ENCODE measurements at regions of chr12 and their contacts with region 1.

Region 1: DNA sequence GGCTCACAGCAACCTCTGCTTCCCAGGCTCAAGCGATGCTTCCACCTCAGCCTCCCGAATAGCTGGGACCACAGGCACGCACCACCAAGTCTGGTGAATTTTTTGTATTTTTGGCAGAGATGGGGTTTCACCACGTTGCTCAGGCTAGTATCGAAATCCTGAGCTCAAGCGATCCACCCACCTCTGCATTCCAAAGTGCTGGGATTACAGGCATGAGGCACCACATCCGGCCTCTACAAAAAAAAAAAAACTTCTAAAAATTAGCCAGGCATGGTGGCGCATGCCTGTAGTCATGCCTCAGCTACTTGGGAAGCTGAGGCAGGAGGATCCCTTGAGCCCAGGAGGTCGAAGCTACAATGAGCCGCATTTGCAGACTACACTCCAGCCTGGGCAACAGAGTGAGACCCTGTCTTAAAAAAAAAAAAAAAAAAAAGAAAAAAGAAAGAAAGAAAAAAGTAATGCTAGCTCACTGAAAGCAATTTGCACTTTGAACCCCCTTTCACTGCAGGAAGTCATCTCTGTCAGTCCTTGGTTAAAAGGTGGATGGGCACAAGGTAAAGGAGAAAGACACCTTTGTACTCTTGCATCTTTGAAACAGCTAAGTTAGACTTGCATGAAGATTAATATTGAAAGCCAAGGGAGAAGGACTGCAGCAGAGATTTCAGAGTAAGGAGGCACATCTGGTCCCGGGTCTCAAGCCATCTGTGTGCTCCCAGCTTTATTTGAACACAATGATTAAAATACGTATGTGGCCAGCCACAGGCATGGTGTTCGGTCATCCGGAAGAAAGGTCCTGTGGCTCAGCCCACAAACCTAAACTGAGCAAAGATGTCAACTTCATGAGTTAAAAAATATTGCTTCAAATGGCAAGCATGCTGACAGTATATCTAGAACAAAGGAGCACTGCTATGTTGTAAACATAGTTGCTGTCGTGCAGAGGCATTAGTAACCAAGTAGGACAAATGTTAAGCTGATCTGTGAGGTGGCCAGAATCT is 103.8 kb upstream of the HMGA2 start:
- DNase-seq: peak; percentile 42
- ATAC-seq: no peak
- H3K4me3 ChIP-seq: no peak overlapping the region
- H3K27ac ChIP-seq: no peak overlapping the region
- H3K4me1 ChIP-seq: no peaks in the 10 kb centered on the region
- H3K27me3 ChIP-seq: no peaks in the 10 kb centered on the region
- CTCF ChIP-seq: no peak
- POLR2A ChIP-seq: no peak
- RAD21 ChIP-seq: no peak

Region 2: GRCh38 chr12:64877363-64878004 is 842.9 kb before region 1 on chr12:
- CTCF ChIA-PET with region 1: no interaction called
- POLR2A ChIA-PET with region 1: no interaction called
- dilution Hi-C with region 1: no loop called
- in situ Hi-C with region 1: no loop called
- intact Hi-C with region 1: no loop called
- DNase-seq: no peak
- ATAC-seq: no peak
- H3K4me3 ChIP-seq: no peak overlapping the region
- H3K27ac ChIP-seq: no peak overlapping the region
- H3K4me1 ChIP-seq: no peaks in the 10 kb centered on the region
- H3K27me3 ChIP-seq: peaks cover 29% of the 10 kb centered on the region
- CTCF ChIP-seq: no peak
- POLR2A ChIP-seq: no peak
- RAD21 ChIP-seq: no peak

Region 3: DNA sequence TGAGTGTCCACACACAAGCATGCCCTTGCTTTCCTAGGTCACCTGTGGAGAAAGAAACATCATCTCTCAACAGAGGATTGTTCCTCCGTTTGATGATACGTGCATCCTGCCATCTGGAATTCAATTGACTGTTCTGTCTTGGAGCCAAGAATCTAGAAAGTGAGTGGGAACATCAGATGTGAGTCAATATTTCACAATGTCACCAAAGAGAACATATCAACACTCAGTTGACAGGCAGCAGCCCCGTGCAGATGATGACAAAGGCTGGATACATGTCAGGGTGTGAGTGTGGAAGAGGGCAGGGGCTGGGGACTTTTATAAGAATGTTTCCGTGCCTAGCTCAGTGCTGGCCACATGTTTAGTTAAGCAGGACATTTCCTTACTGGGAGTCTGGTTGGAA is 819.9 kb before region 1 on chr12:
- CTCF ChIA-PET with region 1: no interaction called
- POLR2A ChIA-PET with region 1: no interaction called
- dilution Hi-C with region 1: no loop called
- in situ Hi-C with region 1: loop called (anchors 25 kb)
- intact Hi-C with region 1: loop called (anchors 10 kb)
- DNase-seq: peak; percentile 76
- ATAC-seq: peak; percentile 46; the same call in 1 of the 2 replicates
- H3K4me3 ChIP-seq: no peak overlapping the region
- H3K27ac ChIP-seq: no peak overlapping the region
- H3K4me1 ChIP-seq: peaks cover 3% of the 10 kb centered on the region; the same call in 1 of the 2 replicates
- H3K27me3 ChIP-seq: no peaks in the 10 kb centered on the region
- CTCF ChIP-seq: no peak
- POLR2A ChIP-seq: no peak
- RAD21 ChIP-seq: no peak

Region 4: GRCh38 chr12:65685514-65685913 is 34.9 kb before region 1 on chr12:
- CTCF ChIA-PET with region 1: no interaction called
- POLR2A ChIA-PET with region 1: no interaction called
- dilution Hi-C with region 1: no loop called
- in situ Hi-C with region 1: no loop called
- intact Hi-C with region 1: no loop called
- DNase-seq: peak; percentile 43
- ATAC-seq: peak; percentile 59; the same call in 1 of the 2 replicates
- H3K4me3 ChIP-seq: no peak overlapping the region
- H3K27ac ChIP-seq: no peak overlapping the region
- H3K4me1 ChIP-seq: no peaks in the 10 kb centered on the region; the same call in 1 of the 2 replicates
- H3K27me3 ChIP-seq: no peaks in the 10 kb centered on the region
- CTCF ChIP-seq: peak; percentile 58
- POLR2A ChIP-seq: no peak
- RAD21 ChIP-seq: peak; percentile 64